ENCODE measurements at regions of chr11 and their contacts with region 1.

Region 1: DNA sequence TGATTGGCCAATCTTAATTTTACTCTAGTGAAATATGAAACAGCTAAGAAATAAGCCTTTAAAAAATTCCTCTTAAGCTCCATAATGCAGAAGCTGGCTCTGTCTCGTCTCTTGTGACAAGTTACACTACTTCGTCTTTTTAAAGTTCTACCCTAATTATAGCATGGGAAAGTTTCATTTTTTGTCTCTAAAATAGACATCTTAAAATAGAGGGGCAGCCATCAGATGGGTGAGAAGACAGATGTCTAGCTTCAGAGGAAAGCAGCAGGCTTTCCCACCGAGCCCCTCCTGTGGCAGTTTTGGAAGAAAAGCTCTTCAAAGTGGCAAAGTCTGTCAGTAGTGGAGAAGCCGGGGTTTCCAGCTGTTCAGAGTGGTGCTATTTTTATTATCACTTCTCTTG is 39.5 kb downstream of the XRRA1 start:
- DNase-seq: no peak
- ATAC-seq: no peak

Region 2: GRCh38 chr11:74849525-74850391 is 59.6 kb before region 1 on chr11:
- intact Hi-C with region 1: loop called in 1 of 2 experiments (anchors 10 kb)
- DNase-seq: no peak
- ATAC-seq: no peak